PC-9 (cell line): ENCODE measurements at regions of chr1 and their contacts with region 1.

Region 1: DNA sequence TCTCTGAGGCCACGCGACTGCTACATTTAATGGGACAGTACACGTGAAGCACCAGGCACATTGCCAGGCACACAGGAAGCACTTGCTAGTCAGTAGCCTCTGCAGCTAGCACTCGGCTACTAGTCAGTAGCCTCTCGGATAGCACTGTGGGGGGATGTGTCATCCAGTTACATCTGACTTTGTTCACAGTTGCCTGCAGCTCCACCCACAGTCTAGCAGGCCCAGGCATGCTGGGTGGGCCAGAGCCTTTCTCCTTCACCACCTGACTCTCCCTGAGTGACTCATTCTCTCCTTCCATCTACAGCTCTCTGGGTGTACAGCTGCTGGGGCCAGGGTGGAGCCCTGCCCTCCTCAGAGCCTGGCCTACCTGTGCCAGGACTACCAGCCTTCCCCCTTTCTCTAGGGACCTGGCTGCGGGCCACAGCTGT is 51.5 kb downstream of the PTPRF start:
- DNase-seq: peak; percentile 91 to 93
- H3K4me3 ChIP-seq: no peak overlapping the region
- H3K27ac ChIP-seq: peak overlapping the region; percentile 21; the same call in 1 of the 2 replicates
- H3K4me1 ChIP-seq: peaks cover 14% of the 10 kb centered on the region
- H3K27me3 ChIP-seq: no peaks in the 10 kb centered on the region
- CTCF ChIP-seq: no peak

Region 2: DNA sequence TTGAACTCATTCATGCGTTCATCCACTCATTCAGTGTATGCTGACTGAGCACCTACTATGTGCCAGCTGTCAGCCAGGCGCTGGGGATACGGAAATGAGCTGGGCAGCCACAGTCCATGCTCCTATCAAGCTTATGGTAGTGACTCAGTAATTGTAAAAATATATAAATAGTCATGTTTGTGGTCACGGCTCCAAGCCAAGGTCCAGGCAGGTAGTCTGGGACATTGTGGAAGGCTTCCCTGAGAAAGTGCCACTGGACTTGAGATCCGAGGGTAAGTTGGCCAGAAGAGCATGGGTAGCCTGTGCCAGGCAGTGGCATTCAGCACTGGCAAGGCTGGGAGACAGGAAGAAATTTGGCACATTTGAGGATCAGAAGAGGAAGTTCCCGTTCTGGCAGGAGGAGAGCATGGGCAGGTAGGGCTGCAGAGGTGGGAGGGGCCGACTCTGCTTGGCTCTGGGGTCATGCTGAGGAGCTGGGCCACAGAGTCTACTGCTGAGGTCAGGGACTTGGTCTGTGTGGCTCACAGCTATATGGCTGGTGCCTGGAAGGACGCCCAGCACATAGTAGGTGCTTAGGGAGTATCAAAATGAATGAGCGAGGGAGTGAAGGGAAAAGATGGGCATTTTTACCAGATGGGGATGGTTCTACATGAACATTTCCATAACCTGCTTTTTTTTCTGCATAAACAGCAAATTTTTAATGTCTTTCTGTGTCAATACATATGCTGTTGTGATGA is 44.6 kb before region 1 on chr1:
- CTCF ChIA-PET with region 1: no interaction called
- POLR2A ChIA-PET with region 1: interaction called, 3 read pairs
- intact Hi-C with region 1: loop called (anchors 2 kb)
- DNase-seq: peak; percentile 74 to 76
- H3K4me3 ChIP-seq: no peak overlapping the region
- H3K27ac ChIP-seq: peak overlapping the region; percentile 72
- H3K4me1 ChIP-seq: peaks cover 56% of the 10 kb centered on the region
- H3K27me3 ChIP-seq: no peaks in the 10 kb centered on the region
- CTCF ChIP-seq: no peak

Region 3: GRCh38 chr1:43554444-43554992 is 27.7 kb before region 1 on chr1:
- CTCF ChIA-PET with region 1: interaction called, 11 read pairs
- POLR2A ChIA-PET with region 1: no interaction called
- intact Hi-C with region 1: loop called (anchors 1 kb)
- DNase-seq: peak in 1 of 2 experiments; percentile 40
- H3K4me3 ChIP-seq: no peak overlapping the region
- H3K27ac ChIP-seq: 0 out of 2 replicates have a peak overlapping the region, but pooled peaks have one; percentile 13
- H3K4me1 ChIP-seq: peaks cover 79% of the 10 kb centered on the region
- H3K27me3 ChIP-seq: no peaks in the 10 kb centered on the region
- CTCF ChIP-seq: peak; percentile 68

Region 4: GRCh38 chr1:43660355-43660754 is 78.2 kb after region 1 on chr1:
- CTCF ChIA-PET with region 1: no interaction called
- POLR2A ChIA-PET with region 1: interaction called, 15 read pairs
- intact Hi-C with region 1: no loop called
- DNase-seq: no peak
- H3K4me3 ChIP-seq: no peak overlapping the region
- H3K27ac ChIP-seq: no peak overlapping the region
- H3K4me1 ChIP-seq: no peaks in the 10 kb centered on the region
- H3K27me3 ChIP-seq: no peaks in the 10 kb centered on the region
- CTCF ChIP-seq: no peak